Esophagus muscularis mucosa (tissue), 4 donors: ENCODE measurements at regions of chr3 and their contacts with region 1.

Region 1: DNA sequence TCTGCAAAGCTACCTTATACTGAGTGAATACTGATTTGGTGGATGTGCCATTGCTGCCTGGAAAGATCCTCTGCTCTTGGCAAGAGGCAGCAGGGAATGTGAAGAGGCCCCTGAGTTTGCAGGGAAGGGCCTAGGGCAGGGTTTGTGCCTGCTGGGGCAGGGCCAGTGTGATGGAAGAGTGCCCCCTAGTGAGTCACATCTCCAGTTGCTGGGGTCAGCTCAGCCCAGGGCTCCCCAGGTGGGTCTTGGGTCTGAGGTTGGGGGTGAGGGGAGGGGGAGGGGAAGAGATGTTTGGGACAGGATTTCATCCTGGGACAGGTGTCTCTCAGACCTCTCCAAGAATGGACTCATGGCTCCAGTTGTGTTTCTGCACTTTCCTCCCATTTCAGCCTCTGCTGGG is 4.1 kb upstream of the AMOTL2 start:
- DNase-seq: no peak
- H3K4me3 ChIP-seq: no peak overlapping the region
- H3K27ac ChIP-seq: no peak overlapping the region
- H3K4me1 ChIP-seq: peaks cover 20 to 35% (median 22%) of the 10 kb centered on the region in 4 donors
- H3K27me3 ChIP-seq: no peaks in the 10 kb centered on the region
- CTCF ChIP-seq: peak; percentile 52 to 62 (median 54)
- EP300 ChIP-seq: no peak
- POLR2A ChIP-seq: no peak

Region 2: DNA sequence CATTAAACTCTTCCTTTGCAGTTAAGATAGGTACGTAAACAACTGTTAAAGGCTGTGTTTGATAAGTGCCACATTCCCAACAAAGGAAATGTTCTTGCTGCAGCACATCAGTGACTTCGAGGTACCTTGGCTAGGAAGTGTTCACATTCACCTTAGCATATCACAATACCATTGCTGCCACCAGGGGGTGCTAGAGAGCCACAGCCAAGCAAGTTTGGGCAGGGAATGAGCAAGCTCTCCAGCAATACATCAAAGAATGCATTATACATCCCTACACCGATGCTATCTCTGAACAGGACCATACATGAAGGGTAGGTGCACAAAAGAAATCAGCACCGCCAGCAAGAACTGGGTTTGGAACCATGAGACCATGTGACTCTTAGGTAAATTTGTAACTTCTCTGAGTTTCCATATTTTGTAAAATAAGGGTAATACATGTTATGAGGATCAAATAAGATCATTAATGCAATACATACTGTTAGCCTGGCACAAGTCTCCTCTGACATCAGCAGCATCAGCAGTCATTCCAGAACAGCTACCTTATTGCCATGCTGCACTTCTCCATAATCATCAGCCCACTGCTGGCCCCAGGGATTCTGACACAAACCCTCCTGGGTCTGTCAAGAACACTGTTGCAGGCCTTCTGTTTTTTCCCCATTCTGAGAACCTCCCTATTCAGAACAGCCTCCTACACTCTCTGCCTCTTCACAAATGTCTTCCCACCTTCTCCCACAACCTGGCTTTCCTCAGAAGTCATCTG is 165.3 kb before region 1 on chr3:
- intact Hi-C with region 1: loop called (anchors 5 kb)
- DNase-seq: peak; percentile 96
- H3K4me3 ChIP-seq: no peak overlapping the region
- H3K27ac ChIP-seq: no peak overlapping the region
- H3K4me1 ChIP-seq: peaks cover 3 to 38% (median 26%) of the 10 kb centered on the region in 4 donors
- H3K27me3 ChIP-seq: no peaks in the 10 kb centered on the region
- CTCF ChIP-seq: peak; percentile 87 to 98 (median 96)
- EP300 ChIP-seq: no peak
- POLR2A ChIP-seq: no peak

Region 3: DNA sequence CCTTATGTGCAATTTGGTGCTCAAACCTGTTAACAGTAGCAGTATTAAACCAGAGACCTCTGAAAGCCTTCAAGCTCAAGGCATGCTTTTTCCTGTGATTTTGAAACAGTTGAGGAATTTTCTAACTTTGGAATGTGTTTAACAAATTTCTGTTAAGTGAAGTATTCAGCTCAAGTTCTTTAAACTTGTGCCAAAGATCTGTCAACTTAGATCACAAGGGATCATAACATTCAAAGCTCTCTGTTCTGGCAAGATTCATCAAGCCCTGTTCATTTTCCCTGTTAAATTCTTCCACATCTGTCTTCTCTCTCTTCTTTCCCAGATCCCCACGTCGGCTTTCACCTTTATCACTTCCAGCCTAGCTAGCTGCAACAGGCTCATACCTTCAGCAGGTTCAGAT is 98.9 kb before region 1 on chr3:
- intact Hi-C with region 1: no loop called
- DNase-seq: no peak
- H3K4me3 ChIP-seq: no peak overlapping the region
- H3K27ac ChIP-seq: peak overlapping the region in 3 of 4 donors; percentile 27 to 42 (median 35)
- H3K4me1 ChIP-seq: peaks cover 0 to 25% (median 15%) of the 10 kb centered on the region in 4 donors
- H3K27me3 ChIP-seq: no peaks in the 10 kb centered on the region
- CTCF ChIP-seq: no peak
- EP300 ChIP-seq: no peak
- POLR2A ChIP-seq: no peak

Region 4: DNA sequence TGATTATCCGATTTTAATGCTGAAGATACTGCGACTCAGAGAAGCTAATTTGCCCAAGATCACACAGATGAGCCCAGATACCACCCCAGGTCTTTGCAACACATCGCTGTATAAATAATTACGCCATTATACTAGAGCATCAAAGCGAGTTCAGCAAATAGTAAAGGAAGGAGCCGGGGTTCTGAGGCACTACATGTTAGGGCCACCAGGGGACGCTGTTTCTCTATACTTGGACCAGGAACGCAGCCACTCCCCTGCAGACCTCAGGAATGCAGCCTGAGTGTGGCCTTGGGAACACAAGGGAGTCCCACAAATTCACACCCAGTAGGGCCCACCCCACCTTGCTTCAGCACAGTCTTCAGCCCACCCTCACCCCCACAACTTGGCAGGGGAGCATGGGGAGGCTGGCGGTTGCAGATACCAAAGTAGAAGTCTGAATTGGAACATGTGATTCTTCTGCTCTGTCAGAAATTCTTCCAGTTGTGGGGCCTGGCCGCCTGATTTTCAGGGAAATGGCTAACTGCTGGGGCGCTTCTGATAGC is 70.0 kb before region 1 on chr3:
- intact Hi-C with region 1: loop called (anchors 2 kb)
- DNase-seq: peak; percentile 97
- H3K4me3 ChIP-seq: peak overlapping the region; percentile 10 to 35 (median 16)
- H3K27ac ChIP-seq: peak overlapping the region; percentile 91 to 99 (median 92)
- H3K4me1 ChIP-seq: peaks cover 30 to 61% (median 54%) of the 10 kb centered on the region in 4 donors
- H3K27me3 ChIP-seq: no peaks in the 10 kb centered on the region
- CTCF ChIP-seq: peak; percentile 98 to 100 (median 100)
- EP300 ChIP-seq: no peak
- POLR2A ChIP-seq: no peak